Vagina (tissue), 2 donors: ENCODE measurements at regions of chr2 and their contacts with region 1.

Region 1: GRCh38 chr2:20179755-20180594 is 45.0 kb downstream of the SDC1 start:
- DNase-seq: no peak
- H3K4me3 ChIP-seq: no peak overlapping the region
- H3K27ac ChIP-seq: peak overlapping the region; percentile 76
- H3K4me1 ChIP-seq: peaks cover 27% of the 10 kb centered on the region
- H3K27me3 ChIP-seq: no peaks in the 10 kb centered on the region
- CTCF ChIP-seq: no peak
- POLR2A ChIP-seq: no peak

Region 2: DNA sequence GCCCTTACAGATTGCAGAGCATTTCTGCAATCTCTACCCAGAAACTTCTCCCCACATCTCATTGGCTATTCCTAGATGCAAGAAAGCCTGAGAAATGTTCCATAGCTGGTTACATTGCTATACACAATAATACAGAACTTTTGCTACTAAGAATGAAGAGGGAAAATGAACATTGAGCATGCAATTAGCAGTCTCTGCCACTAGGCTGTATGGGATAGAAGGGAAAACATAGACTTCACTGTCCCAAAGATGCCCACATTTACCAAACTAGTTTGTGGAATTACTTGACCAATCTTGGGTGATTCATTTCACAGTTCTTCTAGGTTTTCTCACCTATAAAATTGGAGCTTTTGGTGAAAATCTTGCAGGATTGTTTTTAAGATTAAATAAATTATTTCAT is 1324.9 kb before region 1 on chr2:
- intact Hi-C with region 1: loop called (anchors 5 kb)
- DNase-seq: no peak
- H3K4me3 ChIP-seq: no peak overlapping the region
- H3K27ac ChIP-seq: no peak overlapping the region
- H3K4me1 ChIP-seq: no peaks in the 10 kb centered on the region
- H3K27me3 ChIP-seq: no peaks in the 10 kb centered on the region
- CTCF ChIP-seq: no peak
- POLR2A ChIP-seq: no peak

Region 3: DNA sequence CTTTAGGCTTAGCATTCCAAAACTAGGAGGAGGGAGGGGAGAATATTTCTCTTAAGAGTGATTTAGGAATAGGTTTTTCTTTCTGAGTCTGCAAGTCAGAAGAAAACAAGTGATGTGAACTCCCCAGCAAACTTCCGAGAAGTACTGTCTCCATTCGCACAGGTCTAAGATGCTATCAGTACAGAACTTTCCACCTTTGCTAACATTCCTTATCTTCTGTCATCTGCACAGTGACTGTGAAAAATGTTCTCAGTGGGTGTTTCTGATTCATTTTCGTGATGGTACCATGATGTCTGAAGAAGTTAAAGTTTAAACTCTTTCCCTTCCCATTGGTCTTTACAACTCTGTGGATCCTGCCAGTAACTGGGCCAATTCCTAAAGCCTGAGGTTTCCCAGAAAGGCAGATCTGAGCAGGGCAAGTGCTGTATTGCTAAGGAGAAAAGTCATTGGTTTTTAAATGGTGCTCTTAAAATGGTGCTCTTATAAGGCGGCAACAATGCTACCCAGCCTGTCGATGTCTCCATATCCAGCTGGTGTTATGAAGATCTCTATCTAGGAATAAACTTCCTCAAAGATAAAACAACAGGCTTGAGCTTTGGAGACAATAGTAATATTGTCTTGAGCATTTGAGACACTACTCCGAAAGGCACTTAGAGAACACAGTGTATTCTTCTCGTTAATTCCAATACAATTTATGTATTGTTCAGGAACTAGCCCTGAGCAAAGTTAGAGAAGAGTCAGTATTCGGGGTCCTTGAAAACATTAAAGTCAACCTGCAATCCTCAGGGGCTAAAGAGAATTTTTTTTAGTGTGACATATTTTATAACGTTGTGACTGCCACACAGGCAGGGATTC is 1053.9 kb before region 1 on chr2:
- intact Hi-C with region 1: no loop called
- DNase-seq: no peak
- H3K4me3 ChIP-seq: no peak overlapping the region
- H3K27ac ChIP-seq: no peak overlapping the region
- H3K4me1 ChIP-seq: peaks cover 7% of the 10 kb centered on the region
- H3K27me3 ChIP-seq: no peaks in the 10 kb centered on the region
- CTCF ChIP-seq: no peak
- POLR2A ChIP-seq: no peak

Region 4: DNA sequence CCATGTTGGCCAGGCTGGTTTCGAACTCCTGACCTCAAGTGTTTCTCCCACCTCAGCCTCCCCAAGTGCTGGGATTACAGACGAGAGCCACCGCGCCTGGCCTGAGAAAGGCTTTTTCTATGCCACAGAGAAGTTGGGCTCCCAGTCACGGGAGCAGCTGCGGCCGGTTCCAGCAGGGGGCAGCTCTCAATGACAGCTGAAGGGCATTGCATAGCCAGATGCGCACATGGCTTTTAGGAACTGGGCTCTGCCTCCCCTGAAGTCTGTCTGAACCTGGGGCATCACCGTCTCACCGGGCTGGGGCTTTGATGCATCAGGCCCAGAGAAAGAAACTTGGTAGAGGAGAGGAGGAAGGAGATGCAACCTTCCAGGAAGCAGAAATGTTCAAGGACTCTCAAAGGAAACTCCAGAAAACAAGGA is 44.3 kb before region 1 on chr2:
- intact Hi-C with region 1: no loop called
- DNase-seq: no peak
- H3K4me3 ChIP-seq: no peak overlapping the region
- H3K27ac ChIP-seq: peak overlapping the region; percentile 15
- H3K4me1 ChIP-seq: peaks cover 6% of the 10 kb centered on the region
- H3K27me3 ChIP-seq: no peaks in the 10 kb centered on the region
- CTCF ChIP-seq: peak in 2 of 3 experiments; percentile 28 to 76
- POLR2A ChIP-seq: no peak

Region 5: GRCh38 chr2:20157193-20157891 is 22.6 kb before region 1 on chr2:
- intact Hi-C with region 1: no loop called
- DNase-seq: no peak
- H3K4me3 ChIP-seq: no peak overlapping the region
- H3K27ac ChIP-seq: no peak overlapping the region
- H3K4me1 ChIP-seq: no peaks in the 10 kb centered on the region
- H3K27me3 ChIP-seq: no peaks in the 10 kb centered on the region
- CTCF ChIP-seq: no peak
- POLR2A ChIP-seq: no peak

Region 6: GRCh38 chr2:20223407-20224163 is 43.6 kb after region 1 on chr2:
- intact Hi-C with region 1: no loop called
- DNase-seq: no peak
- H3K4me3 ChIP-seq: peak overlapping the region; percentile 64 to 73
- H3K27ac ChIP-seq: peak overlapping the region; percentile 94
- H3K4me1 ChIP-seq: peaks cover 45% of the 10 kb centered on the region
- H3K27me3 ChIP-seq: no peaks in the 10 kb centered on the region
- CTCF ChIP-seq: no peak
- POLR2A ChIP-seq: no peak